ENCODE measurements at regions of chr3 and their contacts with region 1.

Region 1: GRCh38 chr3:186783073-186783730 is at the start of gene EIF4A2:
- DNase-seq: peak; percentile 78
- H3K4me3 ChIP-seq: peak within 1 kb of the TSS; percentile 100
- H3K27ac ChIP-seq: peak within 1 kb of the TSS; percentile 98
- H3K27me3 ChIP-seq: no peaks in the 10 kb centered on the region
- CTCF ChIP-seq: no peak
- polyA plus RNA-seq, gene EIF4A2: 498 and 774 TPM in 2 replicates

Region 2: GRCh38 chr3:186570096-186570940 is 212.9 kb before region 1 on chr3 and contains the start of gene DNAJB11:
- CTCF ChIA-PET with region 1: no interaction called
- POLR2A ChIA-PET with region 1: interaction called, 27 read pairs
- DNase-seq: peak; percentile 99
- H3K4me3 ChIP-seq: peak within 1 kb of the TSS; percentile 76
- H3K27ac ChIP-seq: peak within 1 kb of the TSS; percentile 52
- H3K27me3 ChIP-seq: no peaks in the 10 kb centered on the region
- CTCF ChIP-seq: no peak
- polyA plus RNA-seq, gene DNAJB11: 43.6 and 56.2 TPM in 2 replicates

Region 3: GRCh38 chr3:186772701-186773424 is 10.3 kb before region 1 on chr3:
- CTCF ChIA-PET with region 1: no interaction called
- POLR2A ChIA-PET with region 1: interaction called, 24 read pairs
- DNase-seq: no peak
- H3K4me3 ChIP-seq: peak overlapping the region; percentile 39
- H3K27ac ChIP-seq: no peak overlapping the region
- H3K27me3 ChIP-seq: no peaks in the 10 kb centered on the region
- CTCF ChIP-seq: no peak

Region 4: DNA sequence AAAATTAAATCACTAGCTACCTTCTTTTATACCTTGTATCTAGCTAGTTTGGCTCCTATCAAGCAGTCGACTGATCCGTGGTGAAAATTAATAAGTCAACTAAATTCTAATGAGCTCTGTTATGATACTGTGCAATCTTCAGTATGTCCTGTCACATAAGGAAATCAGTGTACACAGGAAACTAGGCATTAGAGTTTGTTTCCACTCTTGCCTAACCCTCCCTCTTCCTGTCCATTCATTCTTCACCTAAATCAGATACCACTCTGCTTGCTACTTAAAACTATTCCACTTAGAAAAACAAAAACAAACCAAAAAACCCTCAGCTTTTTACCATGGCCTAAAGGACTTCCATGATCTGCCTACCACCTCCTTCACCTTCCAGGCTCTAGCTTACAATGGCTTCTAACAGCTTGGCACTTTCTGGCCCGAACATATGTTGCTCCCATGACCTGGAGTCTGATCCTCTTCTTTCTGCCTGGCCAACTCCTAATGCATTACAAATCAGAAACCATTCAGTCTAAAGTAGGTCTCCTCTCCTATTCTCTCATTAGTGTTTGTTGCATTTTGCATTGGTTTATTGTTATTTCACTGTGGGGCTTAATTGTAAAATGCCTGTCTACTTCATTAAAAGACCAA is 15.2 kb after region 1 on chr3:
- CTCF ChIA-PET with region 1: no interaction called
- POLR2A ChIA-PET with region 1: interaction called, 10 read pairs
- DNase-seq: no peak
- H3K4me3 ChIP-seq: no peak overlapping the region
- H3K27ac ChIP-seq: no peak overlapping the region
- H3K27me3 ChIP-seq: no peaks in the 10 kb centered on the region
- CTCF ChIP-seq: no peak

Region 5: DNA sequence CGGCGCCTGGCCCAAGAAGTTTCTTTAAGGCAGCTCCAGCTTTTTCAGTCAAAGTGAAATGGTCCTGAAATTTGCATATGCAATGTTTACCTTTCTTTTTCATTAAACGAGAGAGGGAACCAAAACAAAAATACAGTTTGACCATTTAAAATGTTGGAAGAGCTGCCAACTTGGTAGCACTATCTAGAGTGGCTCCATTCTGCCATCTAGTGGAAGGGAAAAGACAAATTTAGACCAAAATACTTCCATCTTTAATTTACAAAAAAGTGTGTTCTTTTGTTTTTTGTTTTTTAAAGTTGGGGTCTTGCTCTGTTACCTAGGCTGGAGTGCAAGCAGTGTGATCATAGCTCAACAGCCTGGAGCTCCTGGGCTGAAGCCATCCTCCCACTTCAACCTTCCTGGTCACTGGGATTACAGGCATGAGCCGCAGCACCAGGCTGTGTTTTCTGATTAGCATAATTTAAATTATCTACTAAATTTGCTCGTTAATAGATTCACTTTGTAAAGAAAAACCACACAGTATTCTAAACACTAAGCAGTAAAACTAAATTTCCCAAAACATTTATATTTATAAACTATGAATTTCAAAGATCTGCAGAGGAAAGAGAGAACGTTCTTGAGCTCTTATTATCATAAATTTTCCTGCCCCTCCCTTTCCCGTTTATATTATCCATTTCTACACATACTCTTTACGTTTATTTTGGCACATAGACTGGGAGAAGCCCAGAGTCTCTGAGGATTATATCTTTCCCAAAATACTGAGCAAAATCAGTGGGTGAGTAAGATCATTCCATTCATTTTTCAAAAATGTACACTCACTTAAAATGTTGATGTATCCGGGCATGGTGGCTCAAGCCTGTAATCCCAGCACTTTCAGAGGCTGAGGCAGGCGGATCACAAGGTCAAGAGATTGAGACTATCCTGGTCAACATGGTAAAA is 38.5 kb after region 1 on chr3:
- CTCF ChIA-PET with region 1: interaction called, 6 read pairs
- POLR2A ChIA-PET with region 1: interaction called, 34 read pairs
- DNase-seq: no peak
- H3K4me3 ChIP-seq: peak overlapping the region; percentile 47
- H3K27ac ChIP-seq: peak overlapping the region; percentile 87
- H3K27me3 ChIP-seq: no peaks in the 10 kb centered on the region
- CTCF ChIP-seq: peak; percentile 73

Region 6: GRCh38 chr3:186826976-186827731 is 44.0 kb after region 1 on chr3:
- CTCF ChIA-PET with region 1: interaction called, 6 read pairs
- POLR2A ChIA-PET with region 1: interaction called, 34 read pairs
- DNase-seq: peak; percentile 39
- H3K4me3 ChIP-seq: peak overlapping the region; percentile 62
- H3K27ac ChIP-seq: no peak overlapping the region
- H3K27me3 ChIP-seq: peaks cover 34% of the 10 kb centered on the region
- CTCF ChIP-seq: no peak